ENCODE measurements at regions of chr12 and their contacts with region 1.

Region 1: DNA sequence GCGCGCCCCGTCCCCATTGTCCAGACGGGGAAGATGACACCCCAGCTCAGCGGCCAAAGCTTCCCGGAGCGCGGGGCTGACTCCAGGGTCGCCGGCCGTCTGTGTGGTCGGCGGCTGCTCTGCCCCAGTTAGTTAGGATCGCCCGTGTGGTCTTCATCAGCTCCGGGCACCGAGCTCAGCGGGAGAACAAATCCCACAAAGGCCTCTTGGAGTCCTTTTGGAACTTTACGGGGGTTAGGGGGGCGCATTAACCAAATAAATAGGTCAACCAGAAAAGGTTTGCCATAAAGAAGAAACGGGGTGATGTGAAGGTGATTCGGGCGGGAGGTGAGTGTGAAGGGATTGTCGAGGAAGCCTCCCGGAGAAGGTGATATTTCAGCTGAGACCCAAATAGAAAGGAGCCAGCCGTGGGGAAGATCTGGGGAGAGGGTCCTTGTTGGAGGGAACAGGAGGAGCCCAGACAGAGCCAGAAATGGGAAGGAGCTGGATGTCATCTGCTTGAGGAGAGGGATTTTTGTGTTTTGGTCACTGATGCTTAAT is 697 bp downstream of the ATP6V0A2 start:
- DNase-seq: peak in 1 of 10 donors; percentile 1
- ATAC-seq: no peak
- H3K4me3 Mint-ChIP-seq: peak overlapping the region; percentile 81 to 94 (median 88)
- H3K27ac Mint-ChIP-seq: peak overlapping the region; percentile 74 to 90 (median 88)
- H3K4me1 Mint-ChIP-seq: peaks cover 19 to 42% (median 36%) of the 10 kb centered on the region in 4 donors
- H3K27me3 Mint-ChIP-seq: no peaks in the 10 kb centered on the region

Region 2: DNA sequence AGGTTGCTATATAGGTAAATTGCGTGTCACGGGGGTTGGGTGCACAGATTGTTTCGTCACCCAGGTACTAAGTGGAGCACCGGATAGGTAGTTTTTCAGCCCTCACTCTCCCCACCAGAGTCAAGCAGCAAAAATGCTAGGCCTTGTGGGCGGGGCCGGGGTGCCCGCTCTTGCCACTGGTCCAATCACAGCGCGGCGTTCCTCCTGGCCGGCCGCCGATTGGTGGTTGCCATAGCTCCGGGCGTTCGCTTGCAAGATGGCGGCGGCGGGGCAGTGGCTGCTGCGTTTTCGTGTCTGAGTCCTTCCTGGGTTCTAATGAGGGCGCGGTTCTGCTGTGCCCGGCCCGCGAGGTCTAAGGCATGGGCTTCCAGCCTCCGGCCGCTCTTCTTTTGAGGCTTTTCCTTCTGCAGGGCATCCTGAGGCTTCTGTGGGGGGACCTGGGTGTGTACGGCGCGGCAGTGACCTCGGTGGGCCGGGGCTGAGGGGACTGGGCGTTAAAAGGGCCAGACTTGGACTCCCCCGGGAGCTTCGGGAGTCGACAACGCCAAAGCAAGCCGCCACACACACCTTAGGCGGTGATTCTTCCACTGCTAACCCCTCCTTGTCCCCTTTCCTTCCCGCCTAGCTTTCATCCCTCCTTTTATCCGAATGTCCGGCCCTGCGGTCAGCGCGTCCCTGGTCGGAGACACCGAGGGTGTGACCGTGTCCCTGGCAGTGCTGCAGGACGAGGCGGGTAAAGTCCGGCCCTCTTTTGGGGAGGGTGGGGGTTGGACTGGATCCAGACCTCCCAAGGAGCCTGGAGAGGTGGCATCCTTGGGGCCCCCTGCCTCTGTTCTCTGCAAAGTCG is 41.7 kb before region 1 on chr12 and contains the start of gene TCTN2:
- POLR2A ChIA-PET with region 1: interaction called, 11 read pairs
- DNase-seq: peak; percentile 89 to 96 (median 92)
- ATAC-seq: peak; percentile 99 to 100
- H3K4me3 Mint-ChIP-seq: peak within 1 kb of the TSS; percentile 83 to 92 (median 89)
- H3K27ac Mint-ChIP-seq: peak within 1 kb of the TSS; percentile 16 to 93 (median 78)
- H3K4me1 Mint-ChIP-seq: peaks cover 4 to 20% (median 14%) of the 10 kb centered on the region in 4 donors
- H3K27me3 Mint-ChIP-seq: no peaks in the 10 kb centered on the region
- polyA plus RNA-seq, gene TCTN2: 1.0 to 1.8 (median 1.6) TPM

Region 3: GRCh38 chr12:123767613-123768012 is 54.8 kb after region 1 on chr12:
- POLR2A ChIA-PET with region 1: no interaction called
- DNase-seq: no peak
- ATAC-seq: peak in 1 of 2 donors; percentile 44
- H3K4me3 Mint-ChIP-seq: peak overlapping the region in 1 of 10 donors; percentile 65
- H3K27ac Mint-ChIP-seq: peak overlapping the region in 1 of 10 donors; percentile 31
- H3K4me1 Mint-ChIP-seq: peaks cover 3 to 14% (median 10%) of the 10 kb centered on the region in 4 donors
- H3K27me3 Mint-ChIP-seq: peaks cover 0 to 8% (median 1%) of the 10 kb centered on the region in 5 donors